Caco-2 (cell line): ENCODE measurements at regions of chr17 and their contacts with region 1.

Region 1: DNA sequence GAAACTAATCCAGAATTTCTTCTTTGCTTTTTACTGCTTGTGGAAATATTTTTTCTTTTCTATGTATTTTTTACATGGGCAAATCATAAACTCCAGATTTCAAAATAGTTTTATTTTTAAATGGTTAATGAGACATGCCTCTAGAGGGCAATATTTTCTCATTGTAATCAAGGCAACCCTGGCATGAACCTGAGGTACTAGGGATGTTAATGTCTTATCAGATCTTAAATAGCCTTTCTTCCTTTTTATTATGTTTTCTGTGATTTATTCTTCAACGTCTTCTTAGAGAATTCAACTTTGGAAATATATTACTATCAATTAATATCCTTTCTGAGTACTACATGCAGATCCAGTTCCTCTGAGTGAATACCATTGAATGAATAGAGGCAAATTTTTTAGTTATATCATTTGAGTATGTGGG is 324.7 kb downstream of the BCAS3 start:
- DNase-seq: peak in 1 of 2 experiments; percentile 22
- H3K4me3 ChIP-seq: no peak overlapping the region
- H3K4me3 Mint-ChIP-seq: no peak overlapping the region
- H3K27ac Mint-ChIP-seq: no peak overlapping the region
- H3K4me1 ChIP-seq: no peaks in the 10 kb centered on the region
- H3K4me1 Mint-ChIP-seq: peaks cover 9% of the 10 kb centered on the region
- H3K27me3 ChIP-seq: no peaks in the 10 kb centered on the region
- H3K27me3 Mint-ChIP-seq: no peaks in the 10 kb centered on the region
- CTCF ChIP-seq: peak; percentile 45 to 53

Region 2: DNA sequence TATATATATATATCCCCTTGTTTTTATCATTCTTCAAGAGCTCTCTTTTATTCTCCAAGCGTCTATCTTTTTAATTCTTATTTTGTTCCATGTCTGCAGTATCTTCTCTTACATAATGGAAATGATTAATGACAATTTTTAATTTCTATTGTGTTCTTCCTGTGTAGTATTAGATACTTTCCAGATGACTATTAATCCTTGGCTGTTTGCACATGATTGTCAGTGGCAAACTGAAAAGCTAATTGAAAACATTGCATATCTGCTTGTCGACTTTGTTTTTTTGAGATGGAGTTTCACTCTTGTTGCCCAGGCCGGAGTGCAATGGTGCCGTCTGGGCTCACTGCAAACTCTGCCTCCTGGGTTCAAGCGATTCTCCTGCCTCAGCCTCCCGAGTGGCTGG is 199.9 kb before region 1 on chr17:
- CTCF ChIA-PET with region 1: no interaction called
- POLR2A ChIA-PET with region 1: no interaction called
- intact Hi-C with region 1: no loop called
- DNase-seq: no peak
- H3K4me3 ChIP-seq: no peak overlapping the region
- H3K4me3 Mint-ChIP-seq: no peak overlapping the region
- H3K27ac Mint-ChIP-seq: no peak overlapping the region
- H3K4me1 ChIP-seq: 0 out of 2 replicates have a peak, but pooled peaks cover 4% of the 10 kb centered on the region
- H3K4me1 Mint-ChIP-seq: no peaks in the 10 kb centered on the region
- H3K27me3 ChIP-seq: no peaks in the 10 kb centered on the region
- H3K27me3 Mint-ChIP-seq: peaks cover 5% of the 10 kb centered on the region
- CTCF ChIP-seq: no peak

Region 3: DNA sequence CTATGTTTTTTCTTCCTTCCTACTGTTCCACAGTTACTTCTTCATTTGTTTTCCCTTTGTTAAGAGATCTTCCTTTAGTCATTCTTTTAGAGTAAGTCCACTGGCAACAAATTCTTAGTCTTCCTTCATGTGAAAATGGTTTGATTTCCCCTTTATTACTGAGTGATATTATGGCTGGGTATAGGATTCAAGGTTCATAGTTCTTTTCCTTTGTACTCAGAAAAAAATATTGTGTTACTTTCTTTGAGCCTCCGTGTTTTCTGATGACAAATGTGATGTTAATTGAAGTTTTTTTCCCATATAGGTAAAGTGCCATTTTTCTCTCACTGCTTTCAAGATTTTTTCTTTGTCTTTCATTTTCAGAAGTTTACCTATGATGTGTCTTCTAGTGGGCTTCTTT is 114.3 kb after region 1 on chr17:
- CTCF ChIA-PET with region 1: no interaction called
- POLR2A ChIA-PET with region 1: no interaction called
- intact Hi-C with region 1: no loop called
- DNase-seq: no peak
- H3K4me3 ChIP-seq: no peak overlapping the region
- H3K4me3 Mint-ChIP-seq: no peak overlapping the region
- H3K27ac Mint-ChIP-seq: no peak overlapping the region
- H3K4me1 ChIP-seq: no peaks in the 10 kb centered on the region
- H3K4me1 Mint-ChIP-seq: no peaks in the 10 kb centered on the region
- H3K27me3 ChIP-seq: no peaks in the 10 kb centered on the region
- H3K27me3 Mint-ChIP-seq: no peaks in the 10 kb centered on the region
- CTCF ChIP-seq: no peak

Region 4: GRCh38 chr17:61349350-61349749 is 347.0 kb after region 1 on chr17:
- CTCF ChIA-PET with region 1: no interaction called
- POLR2A ChIA-PET with region 1: no interaction called
- intact Hi-C with region 1: loop called (anchors 2 kb)
- DNase-seq: peak in 1 of 2 experiments; percentile 36
- H3K4me3 ChIP-seq: no peak overlapping the region
- H3K4me3 Mint-ChIP-seq: no peak overlapping the region
- H3K27ac Mint-ChIP-seq: no peak overlapping the region
- H3K4me1 ChIP-seq: no peaks in the 10 kb centered on the region
- H3K4me1 Mint-ChIP-seq: no peaks in the 10 kb centered on the region
- H3K27me3 ChIP-seq: no peaks in the 10 kb centered on the region
- H3K27me3 Mint-ChIP-seq: no peaks in the 10 kb centered on the region
- CTCF ChIP-seq: peak; percentile 20 to 45